GM10248 (cell line): ENCODE measurements at regions of chr22 and their contacts with region 1.

Region 1: DNA sequence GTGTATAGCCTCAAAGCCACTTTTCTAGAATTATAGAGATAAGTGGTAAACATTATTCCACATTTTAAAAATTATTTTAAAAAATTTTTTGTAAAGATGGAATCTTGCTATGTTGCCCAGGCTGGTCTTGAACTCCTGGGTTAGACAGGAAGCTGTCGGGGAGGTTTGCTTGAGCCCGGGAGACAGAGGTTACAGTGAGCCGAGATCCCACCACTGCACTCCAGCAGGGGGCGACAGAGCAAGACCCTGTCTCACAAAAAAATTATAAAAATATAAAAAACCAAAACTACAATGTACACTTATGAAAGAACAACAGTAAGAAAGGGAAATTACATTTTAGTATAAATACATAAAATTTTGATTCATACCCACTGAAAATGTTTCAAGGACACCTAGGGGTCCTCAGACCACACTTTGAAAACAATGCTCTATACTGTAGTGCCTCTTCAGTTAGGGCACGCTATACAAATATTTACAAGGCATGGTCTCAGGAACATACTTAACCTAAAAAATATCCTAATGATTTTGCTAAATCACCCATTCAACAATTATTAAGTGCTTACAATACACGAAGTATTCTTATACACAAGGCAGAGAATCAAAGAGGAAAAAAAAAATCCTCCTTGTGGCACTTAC is 111.2 kb downstream of the MRTFA start:
- DNase-seq: no peak
- CTCF ChIP-seq: peak; percentile 58

Region 2: DNA sequence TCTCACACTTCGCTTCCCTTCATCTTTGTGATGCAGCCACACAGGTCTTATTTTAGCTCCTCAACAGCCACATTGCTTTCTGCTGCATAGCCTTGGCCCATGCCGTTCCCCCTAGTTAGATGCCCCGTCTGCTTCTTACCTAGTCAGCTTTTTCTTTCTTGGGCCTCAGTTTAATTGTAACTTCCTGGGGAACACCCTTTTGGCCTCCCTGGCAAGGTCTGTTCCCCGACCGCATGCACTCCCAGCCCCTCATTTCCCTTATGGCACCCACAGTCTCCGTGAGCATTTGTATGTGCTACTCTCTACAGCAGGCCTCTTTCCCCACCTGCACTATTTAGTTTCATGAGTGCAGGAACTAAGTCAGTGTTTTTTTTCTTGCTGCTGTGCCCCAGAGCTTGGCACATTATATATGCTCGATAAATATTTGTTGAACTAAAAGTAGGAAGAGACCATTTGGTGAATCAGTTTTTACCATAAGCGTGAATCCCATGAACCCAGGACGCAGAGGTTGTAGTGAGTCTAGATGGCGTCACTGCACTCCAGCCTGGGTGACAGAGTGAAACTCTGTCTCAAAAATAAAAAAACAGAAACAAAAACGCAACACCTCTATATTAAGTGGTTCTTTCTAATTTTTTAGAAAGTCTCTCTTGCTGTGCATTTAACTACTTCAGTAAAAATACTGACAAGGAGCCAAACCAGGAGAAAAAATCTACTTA is 309.2 kb before region 1 on chr22:
- CTCF ChIA-PET with region 1: no interaction called
- POLR2A ChIA-PET with region 1: no interaction called
- DNase-seq: peak; percentile 39
- CTCF ChIP-seq: no peak

Region 3: GRCh38 chr22:40289991-40290459 is 235.3 kb before region 1 on chr22:
- CTCF ChIA-PET with region 1: no interaction called
- POLR2A ChIA-PET with region 1: no interaction called
- DNase-seq: peak; percentile 61
- CTCF ChIP-seq: no peak

Region 4: GRCh38 chr22:40487663-40488249 is 37.6 kb before region 1 on chr22:
- CTCF ChIA-PET with region 1: interaction called, 12 read pairs
- POLR2A ChIA-PET with region 1: no interaction called
- DNase-seq: peak; percentile 43
- CTCF ChIP-seq: peak; percentile 65

Region 5: GRCh38 chr22:40504285-40505249 is 20.8 kb before region 1 on chr22:
- CTCF ChIA-PET with region 1: interaction called, 15 read pairs
- POLR2A ChIA-PET with region 1: no interaction called
- DNase-seq: peak; percentile 29
- CTCF ChIP-seq: no peak

Region 6: DNA sequence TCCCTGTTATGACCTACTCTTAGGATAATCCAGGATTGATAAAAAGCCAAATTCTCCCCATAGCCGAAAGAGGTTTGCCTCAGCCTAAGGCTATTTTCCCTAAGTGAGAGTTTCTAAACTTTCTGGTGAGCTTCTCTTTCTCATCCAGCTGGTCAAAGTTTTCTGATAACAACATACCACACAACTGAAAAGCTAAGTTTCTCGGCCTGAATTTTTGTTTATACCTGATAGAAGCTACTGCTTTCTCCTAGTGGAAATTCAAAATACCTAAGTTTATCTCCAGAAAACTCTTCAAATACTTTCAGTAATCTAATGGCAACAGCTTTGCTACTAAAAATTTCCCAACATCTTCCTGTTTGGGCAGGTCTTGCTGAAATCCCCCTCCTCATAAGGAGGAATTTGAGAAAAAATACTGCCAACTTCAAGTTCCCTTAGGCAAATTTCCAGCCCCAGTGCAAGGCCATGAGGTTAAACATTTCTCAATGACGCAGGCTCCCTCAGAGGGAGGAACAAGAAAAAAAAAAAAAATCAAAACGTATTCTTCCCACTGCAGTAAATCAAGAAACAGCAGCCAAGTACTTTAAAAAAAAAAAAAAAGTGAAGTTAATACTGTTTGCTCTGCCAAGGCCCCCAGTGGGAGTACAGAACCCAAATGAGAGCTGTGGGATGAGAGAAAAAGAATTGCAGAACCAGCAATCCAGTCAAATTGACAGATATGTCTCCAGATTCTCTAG is 15.8 kb before region 1 on chr22:
- CTCF ChIA-PET with region 1: interaction called, 17 read pairs
- POLR2A ChIA-PET with region 1: no interaction called
- DNase-seq: no peak
- CTCF ChIP-seq: no peak

Region 7: DNA sequence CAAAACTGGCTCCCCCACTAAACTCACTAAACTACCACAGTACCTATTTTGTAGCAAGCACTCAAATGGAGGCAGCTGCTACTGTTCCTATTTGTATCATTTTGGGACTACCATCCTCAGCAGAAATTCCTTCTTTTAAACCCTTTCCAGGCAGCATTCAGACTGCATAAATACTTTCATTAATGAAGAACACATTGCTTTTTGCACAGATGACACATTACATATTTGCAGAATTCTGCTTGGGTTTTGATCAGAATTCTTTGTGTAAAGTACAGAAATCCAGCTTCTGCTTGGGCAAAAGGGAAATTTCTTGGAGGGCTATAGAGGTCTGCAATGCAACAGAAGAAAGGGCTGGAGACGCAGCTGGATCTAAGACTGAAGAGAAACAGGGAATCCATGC is 450.0 kb after region 1 on chr22:
- CTCF ChIA-PET with region 1: no interaction called
- POLR2A ChIA-PET with region 1: no interaction called
- DNase-seq: no peak
- CTCF ChIP-seq: no peak